ENCODE measurements at regions of chr5 and their contacts with region 1.

Region 1: GRCh38 chr5:126531543-126532120 is 63.4 kb downstream of the ALDH7A1 start:
- DNase-seq: no peak
- ATAC-seq: no peak
- H3K4me3 ChIP-seq: no peak overlapping the region
- H3K27ac ChIP-seq: no peak overlapping the region
- H3K4me1 ChIP-seq: peaks cover 5% of the 10 kb centered on the region
- H3K27me3 ChIP-seq: no peaks in the 10 kb centered on the region
- CTCF ChIP-seq: no peak

Region 2: GRCh38 chr5:126354012-126354857 is 177.4 kb before region 1 on chr5:
- intact Hi-C with region 1: loop called (anchors 10 kb)
- DNase-seq: no peak
- ATAC-seq: peak; percentile 71 to 77
- H3K4me3 ChIP-seq: peak overlapping the region; percentile 12
- H3K27ac ChIP-seq: peak overlapping the region; percentile 21
- H3K4me1 ChIP-seq: peaks cover 8% of the 10 kb centered on the region
- H3K27me3 ChIP-seq: no peaks in the 10 kb centered on the region
- CTCF ChIP-seq: peak; percentile 48

Region 3: GRCh38 chr5:126615286-126615685 is 83.7 kb after region 1 on chr5:
- intact Hi-C with region 1: no loop called
- DNase-seq: no peak
- ATAC-seq: no peak
- H3K4me3 ChIP-seq: no peak overlapping the region
- H3K27ac ChIP-seq: no peak overlapping the region
- H3K4me1 ChIP-seq: no peaks in the 10 kb centered on the region
- H3K27me3 ChIP-seq: no peaks in the 10 kb centered on the region
- CTCF ChIP-seq: no peak